IMR-90 (cell line): ENCODE measurements at regions of chr1 and their contacts with region 1.

Region 1: GRCh38 chr1:215845234-215845891 is 278.3 kb downstream of the KCTD3 start:
- DNase-seq: peak; percentile 92
- ATAC-seq: peak; percentile 96
- H3K4me3 ChIP-seq: no peak overlapping the region
- H3K27ac ChIP-seq: peak overlapping the region; percentile 69
- H3K4me1 ChIP-seq: peaks cover 6% of the 10 kb centered on the region
- H3K27me3 ChIP-seq: no peaks in the 10 kb centered on the region
- CTCF ChIP-seq: no peak
- POLR2A ChIP-seq: no peak
- RAD21 ChIP-seq: no peak

Region 2: GRCh38 chr1:215022741-215023141 is 822.6 kb before region 1 on chr1:
- CTCF ChIA-PET with region 1: no interaction called
- POLR2A ChIA-PET with region 1: interaction called, 21 read pairs
- dilution Hi-C with region 1: no loop called
- in situ Hi-C with region 1: no loop called
- intact Hi-C with region 1: no loop called
- DNase-seq: peak; percentile 85
- ATAC-seq: peak; percentile 86
- H3K4me3 ChIP-seq: peak overlapping the region; percentile 36; the same call in 1 of the 2 replicates
- H3K27ac ChIP-seq: peak overlapping the region; percentile 100
- H3K4me1 ChIP-seq: peaks cover 19% of the 10 kb centered on the region
- H3K27me3 ChIP-seq: no peaks in the 10 kb centered on the region
- CTCF ChIP-seq: no peak
- POLR2A ChIP-seq: no peak
- RAD21 ChIP-seq: no peak

Region 3: DNA sequence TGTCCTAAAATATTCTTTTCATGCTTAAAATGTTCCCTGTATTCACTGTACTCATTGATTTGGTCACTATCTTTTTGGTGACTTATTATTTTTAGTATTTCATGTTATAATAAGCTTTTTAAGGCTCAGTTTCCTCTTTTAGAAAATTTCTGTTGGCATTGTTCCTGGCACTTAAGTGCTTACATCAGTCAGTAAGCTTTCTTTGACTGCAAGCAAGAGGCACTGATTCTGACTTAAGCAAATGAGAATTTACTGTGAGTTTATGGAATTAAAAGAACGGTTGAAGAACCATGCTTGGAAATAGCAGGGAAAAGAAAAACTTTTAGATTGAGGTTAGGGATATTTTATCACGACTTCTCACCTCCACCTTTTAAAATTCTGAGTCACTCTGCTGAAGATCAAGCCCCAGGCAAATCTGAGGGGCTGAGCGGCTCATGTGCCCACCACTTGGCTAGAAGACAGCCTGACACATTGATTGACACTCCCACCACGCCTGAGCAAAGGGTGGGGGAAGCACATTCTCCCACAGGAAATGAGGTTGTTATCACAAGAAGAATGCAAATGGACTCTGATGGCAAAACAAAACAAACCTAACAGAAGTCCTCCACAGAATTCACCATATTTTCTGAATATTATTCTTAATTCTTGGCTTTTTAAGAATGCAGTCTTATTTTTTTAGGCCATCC is 175.4 kb before region 1 on chr1:
- CTCF ChIA-PET with region 1: no interaction called
- POLR2A ChIA-PET with region 1: no interaction called
- dilution Hi-C with region 1: no loop called
- in situ Hi-C with region 1: no loop called
- intact Hi-C with region 1: no loop called
- DNase-seq: peak; percentile 54
- ATAC-seq: no peak
- H3K4me3 ChIP-seq: no peak overlapping the region
- H3K27ac ChIP-seq: peak overlapping the region; percentile 18; the same call in 1 of the 2 replicates
- H3K4me1 ChIP-seq: peaks cover 7% of the 10 kb centered on the region
- H3K27me3 ChIP-seq: no peaks in the 10 kb centered on the region
- CTCF ChIP-seq: no peak
- POLR2A ChIP-seq: no peak
- RAD21 ChIP-seq: no peak

Region 4: DNA sequence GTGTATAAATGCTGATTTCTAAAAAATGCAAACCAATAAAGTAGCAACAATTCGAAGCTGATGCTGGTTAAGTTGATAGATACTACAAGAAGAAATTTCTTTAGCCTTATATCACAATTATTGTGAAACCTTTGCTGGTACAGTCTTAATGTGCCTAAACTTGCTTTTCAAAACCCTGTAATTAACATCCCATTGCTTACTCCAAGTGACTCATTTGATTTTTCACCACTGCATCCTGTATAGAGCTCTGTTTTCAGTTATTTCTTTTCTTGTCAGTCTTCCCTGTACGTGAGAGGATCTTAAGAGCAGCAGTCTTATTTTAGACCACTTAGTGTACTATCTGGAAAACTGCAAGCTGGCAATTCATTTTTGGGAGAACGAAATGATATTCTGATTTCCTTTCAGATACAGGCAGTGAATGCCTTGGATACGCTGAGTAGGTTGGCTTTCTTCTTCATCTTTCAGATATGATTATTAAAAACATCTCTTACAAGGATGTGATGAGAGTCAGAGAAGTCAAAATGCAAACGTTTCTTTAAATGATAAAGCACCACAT is 67.9 kb before region 1 on chr1:
- CTCF ChIA-PET with region 1: no interaction called
- POLR2A ChIA-PET with region 1: no interaction called
- dilution Hi-C with region 1: no loop called
- in situ Hi-C with region 1: no loop called
- intact Hi-C with region 1: no loop called
- DNase-seq: peak; percentile 39
- ATAC-seq: peak; percentile 68
- H3K4me3 ChIP-seq: no peak overlapping the region
- H3K27ac ChIP-seq: no peak overlapping the region
- H3K4me1 ChIP-seq: peaks cover 3% of the 10 kb centered on the region; the same call in 1 of the 2 replicates
- H3K27me3 ChIP-seq: no peaks in the 10 kb centered on the region
- CTCF ChIP-seq: no peak
- POLR2A ChIP-seq: no peak
- RAD21 ChIP-seq: no peak

Region 5: DNA sequence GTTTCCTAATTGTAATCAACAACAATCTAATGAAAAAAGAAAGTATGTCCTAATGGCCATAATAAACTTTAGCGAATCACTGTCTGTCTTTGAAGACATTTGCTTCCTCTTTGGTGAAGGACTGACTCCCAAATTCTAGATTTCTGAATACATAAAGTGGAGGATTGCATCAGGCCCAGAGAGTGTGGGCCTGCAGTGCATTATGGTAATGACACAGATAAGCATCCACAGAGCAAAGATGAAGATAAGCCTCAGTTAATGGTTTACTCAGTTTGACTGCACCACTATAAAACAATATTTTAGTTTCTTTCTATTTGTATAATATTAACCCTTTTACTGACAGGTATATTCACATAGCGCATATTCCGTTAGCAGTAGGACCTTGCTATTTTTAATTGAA is 87.2 kb after region 1 on chr1:
- CTCF ChIA-PET with region 1: no interaction called
- POLR2A ChIA-PET with region 1: no interaction called
- dilution Hi-C with region 1: no loop called
- in situ Hi-C with region 1: no loop called
- intact Hi-C with region 1: no loop called
- DNase-seq: no peak
- ATAC-seq: no peak
- H3K4me3 ChIP-seq: no peak overlapping the region
- H3K27ac ChIP-seq: no peak overlapping the region
- H3K4me1 ChIP-seq: no peaks in the 10 kb centered on the region
- H3K27me3 ChIP-seq: no peaks in the 10 kb centered on the region
- CTCF ChIP-seq: no peak
- POLR2A ChIP-seq: no peak
- RAD21 ChIP-seq: no peak

Region 6: GRCh38 chr1:216742625-216743024 is 897.3 kb after region 1 on chr1:
- CTCF ChIA-PET with region 1: no interaction called
- POLR2A ChIA-PET with region 1: no interaction called
- dilution Hi-C with region 1: no loop called
- in situ Hi-C with region 1: loop called (anchors 25 kb)
- intact Hi-C with region 1: no loop called
- DNase-seq: peak; percentile 30
- ATAC-seq: no peak
- H3K4me3 ChIP-seq: no peak overlapping the region
- H3K27ac ChIP-seq: no peak overlapping the region
- H3K4me1 ChIP-seq: no peaks in the 10 kb centered on the region
- H3K27me3 ChIP-seq: no peaks in the 10 kb centered on the region
- CTCF ChIP-seq: peak; percentile 53
- POLR2A ChIP-seq: no peak
- RAD21 ChIP-seq: peak; percentile 36